ENCODE measurements at regions of chr12 and their contacts with region 1.

Region 1: DNA sequence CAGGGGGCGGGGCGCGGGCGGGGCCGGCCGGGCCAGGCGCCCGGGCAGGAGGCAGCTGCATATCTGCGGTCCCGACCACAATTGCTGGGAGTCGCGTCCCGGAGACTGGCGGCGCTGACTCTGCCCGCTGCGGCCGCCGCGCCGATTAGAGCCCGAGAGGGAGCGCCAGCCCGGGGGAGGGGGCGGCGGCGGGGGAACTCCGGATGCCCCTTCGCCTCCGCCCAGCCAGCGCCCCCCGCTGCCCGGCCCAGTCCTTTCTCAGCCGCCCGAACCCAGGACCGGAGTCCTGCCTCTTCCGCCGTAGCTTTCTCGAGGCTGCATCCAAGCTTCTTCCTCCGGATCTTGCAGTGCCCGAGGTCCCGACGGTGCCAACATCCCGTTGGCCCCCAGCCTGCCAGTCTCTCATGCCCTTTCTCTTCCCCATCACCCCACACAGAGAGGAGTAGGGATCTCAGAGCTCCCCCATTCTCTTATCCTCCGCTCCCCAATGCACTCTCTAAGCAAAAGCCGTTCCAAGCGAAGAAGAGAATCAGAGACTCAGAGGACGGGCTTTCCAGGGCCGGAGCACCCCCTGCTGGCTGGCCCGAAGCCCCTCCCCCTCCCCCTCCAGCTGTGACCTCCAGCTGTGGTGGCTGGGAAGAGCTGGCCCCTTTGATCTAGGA is 8.8 kb upstream of the SP7 start:
- DNase-seq: no peak
- H3K4me3 ChIP-seq: peak overlapping the region; percentile 66
- H3K27me3 ChIP-seq: no peaks in the 10 kb centered on the region; the same call in 1 of the 2 replicates
- CTCF ChIP-seq: peak; percentile 93

Region 2: GRCh38 chr12:53200458-53201176 is 144.3 kb before region 1 on chr12:
- CTCF ChIA-PET with region 1: interaction called, 10 read pairs
- POLR2A ChIA-PET with region 1: no interaction called
- DNase-seq: no peak
- H3K4me3 ChIP-seq: no peak overlapping the region
- H3K27me3 ChIP-seq: no peaks in the 10 kb centered on the region
- CTCF ChIP-seq: no peak

Region 3: GRCh38 chr12:53321074-53321814 is 23.7 kb before region 1 on chr12 and contains the start of gene AAAS:
- CTCF ChIA-PET with region 1: interaction called, 210 read pairs
- POLR2A ChIA-PET with region 1: no interaction called
- DNase-seq: peak; percentile 71
- H3K4me3 ChIP-seq: peak within 1 kb of the TSS; percentile 88
- H3K27me3 ChIP-seq: no peaks in the 10 kb centered on the region
- CTCF ChIP-seq: peak; percentile 100
- polyA plus RNA-seq, gene AAAS: 53.3 and 84.3 TPM in 2 replicates

Region 4: DNA sequence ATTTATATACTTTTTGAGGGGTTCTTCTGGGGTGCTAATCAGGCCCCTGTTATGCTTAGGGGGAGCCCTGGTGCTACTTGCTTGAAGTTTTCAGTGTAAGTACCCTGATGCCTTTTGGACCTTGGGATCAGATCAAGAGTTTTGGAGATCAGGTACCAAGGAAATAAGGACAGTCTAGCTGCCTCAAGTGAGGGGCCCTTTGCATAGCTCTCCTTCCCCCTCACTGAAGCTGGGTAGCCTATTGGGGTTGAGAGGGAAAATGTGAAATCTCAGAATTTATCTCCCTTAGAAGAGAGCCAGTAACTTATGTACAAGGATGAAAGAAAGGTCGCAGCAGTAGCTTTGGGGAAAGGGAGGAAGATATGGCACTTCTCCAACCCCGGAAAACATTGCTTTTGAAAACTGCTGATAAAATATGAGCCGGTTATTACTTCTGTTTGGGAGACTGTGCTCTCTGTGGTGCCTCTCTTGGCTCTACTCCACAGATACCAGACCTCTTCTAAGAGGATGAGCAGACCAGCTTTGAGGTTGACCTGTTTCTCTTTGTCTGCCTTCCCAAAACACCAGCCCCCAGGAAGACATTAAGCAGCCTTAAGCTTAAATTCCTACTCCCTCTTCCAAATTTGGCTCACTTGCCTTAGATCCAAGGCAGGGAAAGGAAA is 69.9 kb after region 1 on chr12:
- CTCF ChIA-PET with region 1: interaction called, 163 read pairs
- POLR2A ChIA-PET with region 1: no interaction called
- DNase-seq: no peak
- H3K4me3 ChIP-seq: no peak overlapping the region
- H3K27me3 ChIP-seq: no peaks in the 10 kb centered on the region
- CTCF ChIP-seq: no peak

Region 5: GRCh38 chr12:53427905-53428594 is 83.1 kb after region 1 on chr12:
- CTCF ChIA-PET with region 1: interaction called, 163 read pairs
- POLR2A ChIA-PET with region 1: no interaction called
- DNase-seq: peak; percentile 76
- H3K4me3 ChIP-seq: no peak overlapping the region
- H3K27me3 ChIP-seq: no peaks in the 10 kb centered on the region
- CTCF ChIP-seq: no peak